A549 (cell line): ENCODE measurements at regions of chr17 and their contacts with region 1.

Region 1: GRCh38 chr17:72985881-72986720 is 106.4 kb downstream of the SLC39A11 start:
- DNase-seq: peak; percentile 79 to 93
- ATAC-seq: peak; percentile 86 to 97
- H3K4me3 ChIP-seq: no peak overlapping the region
- H3K27ac ChIP-seq: no peak overlapping the region
- H3K4me1 ChIP-seq: peaks cover 36% of the 10 kb centered on the region
- CTCF ChIP-seq: peak; percentile 86
- EP300 ChIP-seq: no peak
- POLR2A ChIP-seq: no peak
- RAD21 ChIP-seq: peak; percentile 76 to 77

Region 2: GRCh38 chr17:72931163-72931562 is 54.9 kb before region 1 on chr17:
- CTCF ChIA-PET with region 1: no interaction called
- POLR2A ChIA-PET with region 1: no interaction called
- DNase-seq: no peak
- ATAC-seq: no peak
- H3K4me3 ChIP-seq: no peak overlapping the region
- H3K27ac ChIP-seq: no peak overlapping the region
- H3K4me1 ChIP-seq: no peaks in the 10 kb centered on the region
- CTCF ChIP-seq: no peak
- EP300 ChIP-seq: no peak
- POLR2A ChIP-seq: no peak
- RAD21 ChIP-seq: no peak

Region 3: DNA sequence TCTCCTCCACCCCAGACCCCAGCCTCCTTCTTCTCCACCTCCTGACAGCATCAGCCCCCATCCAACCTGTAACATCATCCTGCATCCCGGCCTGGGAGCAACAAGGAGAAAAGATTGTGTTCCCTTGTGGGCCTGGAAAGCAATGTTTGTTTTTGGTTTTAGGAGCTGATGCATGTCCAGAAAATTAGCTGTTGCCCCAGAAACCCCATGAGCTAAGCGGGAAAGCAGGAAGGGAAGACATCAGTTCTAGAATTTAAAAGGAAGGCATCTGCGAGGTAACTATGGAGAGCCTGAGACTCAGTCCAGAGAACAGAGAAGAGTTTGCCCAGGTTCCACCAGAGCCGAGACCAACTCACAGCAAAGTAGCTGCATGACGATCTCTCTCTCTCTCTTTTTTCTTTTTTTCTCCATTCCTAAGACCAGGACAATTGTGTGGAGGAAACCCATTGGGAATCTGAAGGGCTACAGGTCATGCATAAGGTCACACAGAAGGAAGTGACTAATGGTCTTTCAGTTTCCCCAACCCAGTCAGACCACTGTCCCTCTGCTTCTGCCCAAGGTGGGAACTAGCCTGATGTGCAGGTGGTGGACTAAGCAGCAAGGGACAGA is 18.0 kb before region 1 on chr17:
- CTCF ChIA-PET with region 1: interaction called, 21 read pairs
- POLR2A ChIA-PET with region 1: no interaction called
- DNase-seq: no peak
- ATAC-seq: no peak
- H3K4me3 ChIP-seq: no peak overlapping the region
- H3K27ac ChIP-seq: no peak overlapping the region
- H3K4me1 ChIP-seq: no peaks in the 10 kb centered on the region
- CTCF ChIP-seq: no peak
- EP300 ChIP-seq: no peak
- POLR2A ChIP-seq: no peak
- RAD21 ChIP-seq: no peak

Region 4: GRCh38 chr17:73000832-73001231 is 14.7 kb after region 1 on chr17:
- CTCF ChIA-PET with region 1: interaction called, 22 read pairs
- POLR2A ChIA-PET with region 1: no interaction called
- DNase-seq: no peak
- ATAC-seq: no peak
- H3K4me3 ChIP-seq: no peak overlapping the region
- H3K27ac ChIP-seq: no peak overlapping the region
- H3K4me1 ChIP-seq: no peaks in the 10 kb centered on the region
- CTCF ChIP-seq: no peak
- EP300 ChIP-seq: no peak
- POLR2A ChIP-seq: no peak
- RAD21 ChIP-seq: no peak

Region 5: GRCh38 chr17:73092523-73093135 is 106.5 kb after region 1 on chr17 and contains the start of gene SLC39A11:
- CTCF ChIA-PET with region 1: interaction called, 10 read pairs
- POLR2A ChIA-PET with region 1: no interaction called
- DNase-seq: peak; percentile 95 to 96
- ATAC-seq: peak; percentile 98 to 99
- H3K4me3 ChIP-seq: peak within 1 kb of the TSS; percentile 66
- H3K27ac ChIP-seq: peak within 1 kb of the TSS; percentile 84 to 88
- H3K4me1 ChIP-seq: peaks cover 10% of the 10 kb centered on the region; the same call in 2 of the 3 replicates
- CTCF ChIP-seq: no peak
- EP300 ChIP-seq: no peak
- POLR2A ChIP-seq: peak; percentile 93
- RAD21 ChIP-seq: no peak
- polyA plus RNA-seq, gene SLC39A11: 25.2 and 32.0 TPM in 2 replicates

Region 6: GRCh38 chr17:73156166-73156840 is 170.2 kb after region 1 on chr17:
- CTCF ChIA-PET with region 1: interaction called, 13 read pairs
- POLR2A ChIA-PET with region 1: no interaction called
- DNase-seq: peak; percentile 66 to 88
- ATAC-seq: peak; percentile 97 to 98
- H3K4me3 ChIP-seq: no peak overlapping the region
- H3K27ac ChIP-seq: peak overlapping the region in 1 of 2 experiments; percentile 50; a peak in 2 of 6 replicates
- H3K4me1 ChIP-seq: peaks cover 15% of the 10 kb centered on the region
- CTCF ChIP-seq: peak; percentile 67
- EP300 ChIP-seq: no peak
- POLR2A ChIP-seq: no peak
- RAD21 ChIP-seq: peak; percentile 81 to 84